ENCODE measurements at regions of chr5 and their contacts with region 1.

Region 1: DNA sequence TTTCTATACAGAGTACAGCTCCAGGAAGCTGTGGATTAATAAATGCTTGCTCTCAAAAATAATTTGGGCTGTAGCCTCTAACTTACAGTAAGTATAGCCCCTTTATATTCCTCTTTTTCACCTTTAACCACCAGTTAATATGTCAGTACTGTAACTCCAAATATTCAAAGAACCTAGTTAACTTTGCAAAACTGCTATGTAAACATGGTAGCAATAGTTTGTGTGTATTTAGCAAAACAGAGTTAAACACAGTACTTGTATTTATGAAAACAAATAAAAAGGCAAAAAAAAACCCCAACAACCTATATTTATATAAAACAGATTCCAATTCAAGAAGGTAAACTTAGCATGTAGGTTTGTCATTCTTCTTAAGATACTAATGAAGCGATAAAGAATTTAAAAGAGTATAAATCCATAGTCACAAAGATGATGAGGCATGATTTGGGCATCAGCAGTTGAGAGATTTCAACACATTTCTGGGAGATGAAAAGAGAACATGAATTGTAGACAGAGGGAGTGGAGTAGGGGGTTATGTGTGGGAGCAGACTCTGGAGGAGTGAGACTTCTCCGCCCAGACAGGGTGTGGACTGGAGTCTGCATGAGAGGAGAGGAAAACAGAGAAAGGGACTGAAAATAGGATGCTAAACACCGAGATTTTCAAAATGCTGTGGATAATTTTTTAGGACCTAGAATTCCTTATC is 47.0 kb upstream of the F2RL1 start:
- DNase-seq: no peak
- ATAC-seq: peak in 1 of 4 donors; percentile 41
- H3K4me3 ChIP-seq: no peak overlapping the region
- H3K27ac ChIP-seq: no peak overlapping the region
- H3K4me1 ChIP-seq: no peaks in the 10 kb centered on the region
- H3K27me3 ChIP-seq: no peaks in the 10 kb centered on the region
- CTCF ChIP-seq: no peak

Region 2: DNA sequence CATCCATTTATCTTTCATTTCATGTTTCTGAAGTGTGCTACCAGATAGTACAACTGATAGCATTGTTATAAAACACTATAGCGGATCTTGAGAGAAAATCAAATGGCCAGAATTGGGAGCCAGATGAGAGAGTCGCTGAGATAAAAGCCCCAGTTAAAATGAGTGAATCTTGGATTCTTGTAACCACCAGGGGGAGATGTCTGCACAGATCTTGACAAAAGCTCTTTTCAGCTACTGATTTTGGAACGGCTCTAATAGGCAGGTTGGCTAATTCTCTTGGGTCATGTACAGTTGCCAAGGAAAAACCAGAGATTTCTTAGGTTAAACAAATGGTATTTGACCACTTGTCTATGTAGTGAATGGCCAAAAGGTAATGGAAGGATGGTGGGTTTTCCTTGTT is 170.4 kb before region 1 on chr5:
- intact Hi-C with region 1: loop called in 1 of 3 experiments (anchors 10 kb)
- DNase-seq: no peak
- ATAC-seq: peak in 3 of 4 donors; percentile 82 to 87 (median 86)
- H3K4me3 ChIP-seq: no peak overlapping the region
- H3K27ac ChIP-seq: no peak overlapping the region
- H3K4me1 ChIP-seq: no peaks in the 10 kb centered on the region
- H3K27me3 ChIP-seq: no peaks in the 10 kb centered on the region
- CTCF ChIP-seq: peak; percentile 41 to 67 (median 44)

Region 3: GRCh38 chr5:76960004-76960625 is 188.3 kb after region 1 on chr5:
- intact Hi-C with region 1: no loop called
- DNase-seq: no peak
- ATAC-seq: no peak
- H3K4me3 ChIP-seq: no peak overlapping the region
- H3K27ac ChIP-seq: no peak overlapping the region
- H3K4me1 ChIP-seq: no peaks in the 10 kb centered on the region
- H3K27me3 ChIP-seq: no peaks in the 10 kb centered on the region
- CTCF ChIP-seq: no peak